Aorta (tissue), 5 donors: ENCODE measurements at regions of chr16 and their contacts with region 1.

Region 1: GRCh38 chr16:57734925-57735754 is 430 bp upstream of the KATNB1 start:
- DNase-seq: peak; percentile 99
- ATAC-seq: peak; percentile 96
- H3K4me3 ChIP-seq: peak overlapping the region; percentile 75 to 93
- H3K27ac ChIP-seq: peak overlapping the region in 1 of 2 donors; percentile 90
- H3K4me1 ChIP-seq: peaks cover 0 to 3% of the 10 kb centered on the region in 2 donors
- H3K27me3 ChIP-seq: no peaks in the 10 kb centered on the region

Region 2: GRCh38 chr16:57694725-57695679 is 40.1 kb before region 1 on chr16 and contains the start of gene DRC7:
- intact Hi-C with region 1: no loop called
- DNase-seq: peak in 1 of 2 donors; percentile 62
- ATAC-seq: peak; percentile 46
- H3K4me3 ChIP-seq: no peak within 1 kb of the TSS
- H3K27ac ChIP-seq: no peak within 1 kb of the TSS
- H3K4me1 ChIP-seq: no peaks in the 10 kb centered on the region
- H3K27me3 ChIP-seq: no peaks in the 10 kb centered on the region
- total RNA-seq, gene DRC7: not detected

Region 3: GRCh38 chr16:57757326-57757786 is 22.2 kb after region 1 on chr16:
- intact Hi-C with region 1: loop called in 1 of 2 experiments (anchors 2 kb)
- DNase-seq: peak; percentile 92 to 97
- ATAC-seq: peak; percentile 88
- H3K4me3 ChIP-seq: no peak overlapping the region
- H3K27ac ChIP-seq: no peak overlapping the region
- H3K4me1 ChIP-seq: no peaks in the 10 kb centered on the region
- H3K27me3 ChIP-seq: no peaks in the 10 kb centered on the region

Region 4: GRCh38 chr16:57802341-57803133 is 67.4 kb after region 1 on chr16 and contains the start of gene KIFC3:
- intact Hi-C with region 1: loop called in 1 of 2 experiments (anchors 5 kb)
- DNase-seq: peak; percentile 94 to 98
- ATAC-seq: peak; percentile 77
- H3K4me3 ChIP-seq: peak within 1 kb of the TSS; percentile 46 to 57
- H3K27ac ChIP-seq: peak within 1 kb of the TSS in 1 of 2 donors; percentile 38
- H3K4me1 ChIP-seq: no peaks in the 10 kb centered on the region
- H3K27me3 ChIP-seq: no peaks in the 10 kb centered on the region
- total RNA-seq, gene KIFC3: 69.7 to 80.1 TPM